Left ventricle myocardium inferior (tissue), 1 donor: ENCODE measurements at regions of chr4 and their contacts with region 1.

Region 1: GRCh38 chr4:99875072-99875471 is 19.2 kb downstream of the LAMTOR3 start:
- DNase-seq: no peak
- H3K4me3 ChIP-seq: no peak overlapping the region
- H3K27ac ChIP-seq: no peak overlapping the region
- H3K4me1 ChIP-seq: peaks cover 3% of the 10 kb centered on the region
- H3K27me3 ChIP-seq: no peaks in the 10 kb centered on the region
- CTCF ChIP-seq: no peak

Region 2: DNA sequence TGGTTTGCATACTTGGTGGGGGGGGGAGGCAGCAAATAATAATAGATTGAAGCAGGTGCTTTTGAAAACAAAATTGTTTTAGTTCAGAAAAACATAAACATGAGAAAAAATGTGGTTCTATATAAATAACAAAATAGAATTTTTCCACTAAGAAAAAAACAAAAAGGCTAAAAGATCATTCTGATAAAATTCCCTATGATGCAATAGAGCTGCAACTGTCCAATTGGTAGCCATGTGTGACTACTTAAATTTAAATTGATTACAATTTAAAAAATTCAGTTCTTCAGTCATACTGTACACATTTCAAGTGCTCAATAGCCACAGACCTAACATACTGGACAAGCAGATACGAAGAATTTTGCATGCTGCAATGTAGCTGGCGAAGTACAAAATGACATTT is 322.2 kb before region 1 on chr4:
- intact Hi-C with region 1: loop called (anchors 10 kb)
- DNase-seq: no peak
- H3K4me3 ChIP-seq: no peak overlapping the region
- H3K27ac ChIP-seq: no peak overlapping the region
- H3K4me1 ChIP-seq: no peaks in the 10 kb centered on the region
- H3K27me3 ChIP-seq: no peaks in the 10 kb centered on the region
- CTCF ChIP-seq: no peak